Activated T-helper 1 cell treated with anti-CD3 and anti-CD28 coated beads, Interleukin-12 subunit alpha, Interleukin-12 subunit beta, Interleukin-2, Interleukin-4 antibody, amounts not matched to agents 30 ng/mL and 10 ng/mL and 1 ng/mL, durations not matched to agents 14 hours and 24 hours and 36 hours (primary cell): ENCODE measurements at regions of chr5 and their contacts with region 1.

Region 1: GRCh38 chr5:92713208-92713816 is 867.7 kb downstream of the NR2F1-AS1 start:
- DNase-seq: no peak
- H3K4me3 Mint-ChIP-seq: no peak overlapping the region
- H3K27ac Mint-ChIP-seq: no peak overlapping the region
- H3K4me1 Mint-ChIP-seq: no peaks in the 10 kb centered on the region
- H3K27me3 Mint-ChIP-seq: no peaks in the 10 kb centered on the region

Region 2: DNA sequence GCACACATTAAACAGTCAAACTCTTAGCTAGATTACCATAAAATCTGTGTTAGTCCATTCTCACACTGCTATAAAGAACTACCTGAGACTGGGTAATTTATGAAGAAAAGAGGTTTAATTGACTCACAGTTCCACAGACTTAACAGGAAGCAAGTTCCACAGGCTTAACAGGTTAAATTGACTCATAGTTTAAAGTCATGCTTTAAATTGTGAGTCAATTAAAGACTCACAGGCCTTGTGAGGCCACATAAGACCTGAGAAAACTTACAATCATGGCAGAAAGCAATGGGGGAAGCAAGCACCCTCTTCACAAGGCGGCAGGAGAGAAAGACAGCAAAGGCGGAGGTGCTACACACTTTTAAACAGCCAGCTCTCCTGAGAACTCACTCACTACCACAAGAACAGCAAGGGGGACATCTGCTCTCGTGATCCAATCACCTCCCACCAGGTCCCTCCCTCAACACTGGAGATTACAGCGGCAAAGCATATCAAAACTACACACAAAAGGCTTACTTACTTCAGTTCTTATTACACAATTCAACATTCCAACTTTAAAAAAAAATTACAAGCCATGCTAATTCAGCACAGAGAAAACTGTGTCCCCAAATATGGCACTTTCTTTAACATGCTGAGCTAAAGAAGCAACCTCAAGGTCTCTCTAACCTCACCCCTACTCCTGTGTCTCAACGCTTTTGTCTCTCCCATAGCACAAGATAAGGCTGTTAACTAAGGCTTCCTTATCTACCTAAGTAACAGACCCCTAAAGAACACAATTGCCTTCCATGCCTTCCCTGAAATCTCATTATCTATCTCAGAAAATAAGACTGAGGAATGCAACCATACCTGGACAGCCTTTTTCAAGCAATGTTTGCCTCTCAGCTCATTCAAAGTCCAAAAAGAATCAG is 62.7 kb after region 1 on chr5:
- intact Hi-C with region 1: loop called (anchors 2 kb)
- DNase-seq: no peak
- H3K4me3 Mint-ChIP-seq: no peak overlapping the region
- H3K27ac Mint-ChIP-seq: no peak overlapping the region
- H3K4me1 Mint-ChIP-seq: no peaks in the 10 kb centered on the region
- H3K27me3 Mint-ChIP-seq: no peaks in the 10 kb centered on the region